Heart right ventricle (tissue), 16 donors: ENCODE measurements at regions of chr16 and their contacts with region 1.

Region 1: DNA sequence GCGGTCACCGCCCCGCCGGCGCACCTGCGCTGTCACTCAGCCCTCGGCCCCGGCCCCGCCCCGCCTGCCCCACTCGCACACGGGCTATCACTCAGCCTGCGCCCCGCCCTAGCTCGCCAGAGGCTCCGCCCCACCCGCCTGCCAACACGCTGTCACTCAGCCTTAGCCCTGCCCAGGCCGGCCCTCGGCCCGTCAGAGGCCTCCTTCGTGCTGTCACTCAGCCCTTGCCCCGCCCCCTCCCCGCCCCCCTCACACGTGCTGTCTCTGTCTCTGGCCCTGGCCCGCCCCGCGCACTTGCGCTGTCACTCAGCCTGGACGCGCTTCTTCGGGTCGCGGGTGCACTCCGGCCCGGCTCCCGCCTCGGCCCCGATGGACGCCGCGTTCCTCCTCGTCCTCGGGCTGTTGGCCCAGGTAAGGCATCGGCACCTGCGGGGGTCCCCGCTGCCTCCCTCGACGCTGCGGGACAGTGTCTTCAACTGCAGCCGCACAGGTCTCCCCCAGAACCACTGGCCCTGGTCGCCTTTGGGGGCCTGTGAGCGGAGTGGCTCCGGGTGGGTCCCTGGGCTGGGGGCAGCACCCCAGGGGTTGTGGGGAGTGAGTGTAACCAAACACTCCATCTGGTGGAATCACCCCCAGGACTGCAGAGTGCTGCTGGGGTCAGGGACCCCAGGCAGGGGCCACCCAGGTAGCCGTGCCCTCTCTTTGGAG is at the start of gene CDH15:
- DNase-seq: peak; percentile 83 to 90
- ATAC-seq: peak; percentile 88 to 92 (median 92)
- H3K4me3 ChIP-seq: peak within 1 kb of the TSS in 9 of 10 donors; percentile 0 to 45 (median 31)
- H3K27ac ChIP-seq: no peak within 1 kb of the TSS
- H3K4me1 ChIP-seq: peaks cover 0 to 25% (median 17%) of the 10 kb centered on the region in 9 donors
- H3K27me3 ChIP-seq: peaks cover 14 to 73% (median 62%) of the 10 kb centered on the region in 7 donors
- CTCF ChIP-seq: no peak
- total RNA-seq, gene CDH15: 0.08 to 0.16 TPM in 2 of 10 donors, not detected in the others

Region 2: DNA sequence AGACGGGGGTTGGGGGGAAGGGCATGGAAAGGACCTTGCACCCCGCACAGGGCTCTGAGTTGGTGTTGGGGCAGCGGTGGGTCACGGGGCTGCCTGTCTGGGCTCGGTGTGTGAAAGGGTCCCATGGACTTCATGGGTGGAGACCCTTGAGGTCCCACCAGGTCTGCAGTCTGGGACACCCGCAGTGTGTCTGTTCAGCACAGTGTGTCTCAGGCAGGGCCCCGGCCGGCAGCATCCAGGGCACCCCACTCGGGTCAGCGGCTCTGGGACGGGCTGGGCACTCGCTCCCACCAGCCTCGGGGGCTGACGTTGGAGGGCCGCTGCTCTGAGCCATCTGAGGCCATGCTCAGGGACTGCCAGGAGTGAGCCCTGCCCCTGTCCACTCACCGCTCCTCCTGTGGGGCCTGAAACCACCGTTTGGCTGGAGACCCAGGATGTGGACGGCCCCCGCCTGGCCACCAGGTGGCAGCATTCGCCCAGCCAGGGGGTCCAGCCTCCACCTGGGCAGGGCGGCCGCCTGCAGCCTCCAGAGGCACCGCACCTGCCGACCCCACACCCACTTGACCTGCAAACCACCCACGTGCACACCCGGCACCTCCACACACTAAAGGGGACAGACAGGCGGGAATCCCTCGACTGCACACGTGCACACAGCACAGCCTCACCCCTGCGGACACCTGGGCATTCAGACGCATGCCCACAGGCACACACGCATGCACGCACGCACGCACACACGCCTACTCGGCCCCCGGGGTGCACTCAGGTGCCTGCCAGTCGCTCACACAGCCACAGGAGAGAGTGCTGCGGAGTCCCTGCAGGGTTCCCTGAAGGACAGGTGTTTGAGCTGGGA is 728.7 kb before region 1 on chr16:
- intact Hi-C with region 1: loop called in 2 of 10 experiments (anchors 5 to 10 kb)
- DNase-seq: peak; percentile 74 to 80
- ATAC-seq: peak; percentile 82 to 92 (median 88)
- H3K4me3 ChIP-seq: no peak overlapping the region
- H3K27ac ChIP-seq: no peak overlapping the region
- H3K4me1 ChIP-seq: peaks cover 0 to 10% (median 6%) of the 10 kb centered on the region in 9 donors
- H3K27me3 ChIP-seq: peaks cover 0 to 14% (median 7%) of the 10 kb centered on the region in 7 donors
- CTCF ChIP-seq: peak; percentile 95 to 99 (median 97)

Region 3: DNA sequence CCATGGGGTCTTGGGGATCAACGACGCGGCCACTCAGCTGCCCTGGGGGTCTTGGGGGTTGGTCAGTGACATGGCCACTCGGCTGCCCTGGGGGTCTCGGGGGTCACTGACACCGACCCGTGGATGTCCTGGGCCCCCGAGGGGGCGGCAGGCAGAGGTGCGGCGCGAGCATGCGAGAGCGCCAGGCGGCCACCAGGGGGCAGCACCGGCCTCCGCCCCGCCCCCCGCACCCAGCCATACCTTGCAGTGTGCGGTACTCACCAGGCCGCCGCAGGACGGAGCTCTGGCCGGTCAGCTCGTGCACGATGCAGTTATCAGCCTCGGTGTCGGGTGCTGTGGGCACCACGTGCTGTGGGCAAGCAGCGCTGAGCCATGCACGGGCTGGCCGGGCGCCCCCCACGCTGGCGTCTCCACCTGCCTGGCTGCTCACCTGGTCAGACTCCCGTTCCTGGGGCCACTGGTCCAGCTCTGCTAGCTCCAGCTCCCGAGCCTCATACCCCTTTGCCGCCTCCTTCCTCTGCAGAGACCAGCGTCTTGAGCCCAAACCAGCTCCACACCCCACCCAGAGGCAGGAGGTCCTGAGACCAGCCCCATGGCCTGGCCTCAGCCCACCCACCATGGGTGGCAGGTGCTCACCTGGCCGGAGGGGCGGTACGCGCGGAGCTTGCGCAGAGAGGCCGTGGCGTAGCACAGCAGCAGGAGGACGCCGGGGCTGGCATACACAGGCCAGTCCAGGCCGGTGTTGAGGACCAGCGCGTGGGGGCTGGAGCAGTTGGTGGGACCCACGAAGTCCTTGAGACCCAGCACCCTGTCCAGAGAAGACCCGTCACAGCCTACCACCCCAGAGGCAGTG is 434.1 kb before region 1 on chr16:
- intact Hi-C with region 1: loop called (anchors 2 to 10 kb)
- DNase-seq: peak; percentile 42 to 76
- ATAC-seq: peak; percentile 65 to 83 (median 76)
- H3K4me3 ChIP-seq: no peak overlapping the region
- H3K27ac ChIP-seq: no peak overlapping the region
- H3K4me1 ChIP-seq: peaks cover 0 to 10% (median 4%) of the 10 kb centered on the region in 9 donors
- H3K27me3 ChIP-seq: no peaks in the 10 kb centered on the region
- CTCF ChIP-seq: peak; percentile 95 to 99 (median 98)

Region 4: DNA sequence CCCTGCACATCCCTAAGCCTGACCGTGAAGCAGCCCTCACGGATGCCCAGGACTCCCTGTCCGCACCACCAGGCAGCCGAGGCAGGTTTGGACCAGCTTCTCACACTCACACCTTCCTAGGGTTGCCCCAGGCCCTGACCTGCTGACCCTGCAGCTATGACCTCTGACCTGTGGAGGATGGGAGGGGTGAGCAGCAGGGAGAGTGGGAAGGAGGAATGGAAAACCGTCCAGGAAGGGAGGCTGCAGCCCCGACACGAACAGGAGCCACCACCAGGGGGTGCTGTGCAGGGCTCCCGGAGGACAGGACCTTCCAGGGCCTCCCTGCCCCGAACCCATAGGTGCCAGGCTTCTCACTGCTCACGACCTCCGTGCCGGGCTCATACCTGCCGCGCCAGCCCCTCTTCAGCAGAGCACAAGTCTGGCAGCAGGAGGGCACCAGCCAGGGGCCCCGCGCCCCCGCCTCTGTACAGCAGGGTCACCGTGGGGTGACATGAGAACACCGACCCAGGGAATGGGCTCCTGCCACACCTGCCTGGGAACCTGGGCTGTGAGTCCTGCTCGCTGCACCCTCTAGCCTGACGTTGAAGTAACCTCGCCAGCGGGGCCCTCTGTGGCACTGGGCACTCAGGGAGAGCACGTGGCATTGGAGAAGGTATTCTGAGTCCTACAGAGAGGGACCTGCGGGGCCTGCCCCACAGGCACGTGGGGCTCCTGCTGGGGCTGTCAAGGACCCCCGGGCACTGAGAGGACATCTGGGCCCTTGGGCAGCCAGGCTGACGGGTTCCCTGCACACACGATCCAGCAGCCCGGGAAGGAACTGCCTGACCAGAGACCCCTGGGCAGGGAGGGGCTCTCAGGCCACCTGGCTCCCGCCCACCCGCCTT is 427.7 kb before region 1 on chr16:
- intact Hi-C with region 1: loop called in 9 of 10 experiments (anchors 2 to 10 kb)
- DNase-seq: peak; percentile 78 to 87
- ATAC-seq: peak; percentile 43 to 71 (median 65)
- H3K4me3 ChIP-seq: peak overlapping the region in 2 of 10 donors; percentile 12 to 13
- H3K27ac ChIP-seq: peak overlapping the region in 8 of 10 donors; percentile 8 to 81 (median 51)
- H3K4me1 ChIP-seq: peaks cover 11 to 47% (median 33%) of the 10 kb centered on the region in 9 donors
- H3K27me3 ChIP-seq: no peaks in the 10 kb centered on the region
- CTCF ChIP-seq: peak; percentile 84 to 94 (median 89)

Region 5: GRCh38 chr16:89037261-89038152 is 134.1 kb before region 1 on chr16:
- intact Hi-C with region 1: no loop called
- DNase-seq: peak; percentile 26 to 39
- ATAC-seq: peak; percentile 23 to 71 (median 60)
- H3K4me3 ChIP-seq: no peak overlapping the region
- H3K27ac ChIP-seq: no peak overlapping the region
- H3K4me1 ChIP-seq: peaks cover 0 to 4% (median 0%) of the 10 kb centered on the region in 9 donors
- H3K27me3 ChIP-seq: peaks cover 9 to 87% (median 68%) of the 10 kb centered on the region in 7 donors
- CTCF ChIP-seq: no peak

Region 6: GRCh38 chr16:89241187-89242007 is 69.8 kb after region 1 on chr16:
- intact Hi-C with region 1: no loop called
- DNase-seq: peak; percentile 62 to 72
- ATAC-seq: peak; percentile 74 to 84 (median 80)
- H3K4me3 ChIP-seq: peak overlapping the region; percentile 7 to 91 (median 69)
- H3K27ac ChIP-seq: peak overlapping the region; percentile 77 to 99 (median 92)
- H3K4me1 ChIP-seq: peaks cover 0 to 17% (median 11%) of the 10 kb centered on the region in 9 donors
- H3K27me3 ChIP-seq: peaks cover 0 to under 1% (median 0%) of the 10 kb centered on the region in 7 donors
- CTCF ChIP-seq: no peak